K562 (cell line): ENCODE measurements at regions of chr16 and their contacts with region 1.

Region 1: GRCh38 chr16:30602616-30603277 is 7.4 kb downstream of the ZNF689 start:
- DNase-seq: no peak
- ATAC-seq: no peak
- H3K4me3 ChIP-seq: no peak overlapping the region
- H3K27ac ChIP-seq: no peak overlapping the region
- H3K4me1 ChIP-seq: peaks cover 0 to 12% of the 10 kb centered on the region in 2 experiments; a peak in 2 of 5 replicates
- H3K27me3 ChIP-seq: no peaks in the 10 kb centered on the region
- CTCF ChIP-seq: no peak
- EP300 ChIP-seq: no peak
- POLR2A ChIP-seq: 0 out of 2 replicates have a peak, but pooled peaks have one; percentile 35
- RAD21 ChIP-seq: no peak

Region 2: DNA sequence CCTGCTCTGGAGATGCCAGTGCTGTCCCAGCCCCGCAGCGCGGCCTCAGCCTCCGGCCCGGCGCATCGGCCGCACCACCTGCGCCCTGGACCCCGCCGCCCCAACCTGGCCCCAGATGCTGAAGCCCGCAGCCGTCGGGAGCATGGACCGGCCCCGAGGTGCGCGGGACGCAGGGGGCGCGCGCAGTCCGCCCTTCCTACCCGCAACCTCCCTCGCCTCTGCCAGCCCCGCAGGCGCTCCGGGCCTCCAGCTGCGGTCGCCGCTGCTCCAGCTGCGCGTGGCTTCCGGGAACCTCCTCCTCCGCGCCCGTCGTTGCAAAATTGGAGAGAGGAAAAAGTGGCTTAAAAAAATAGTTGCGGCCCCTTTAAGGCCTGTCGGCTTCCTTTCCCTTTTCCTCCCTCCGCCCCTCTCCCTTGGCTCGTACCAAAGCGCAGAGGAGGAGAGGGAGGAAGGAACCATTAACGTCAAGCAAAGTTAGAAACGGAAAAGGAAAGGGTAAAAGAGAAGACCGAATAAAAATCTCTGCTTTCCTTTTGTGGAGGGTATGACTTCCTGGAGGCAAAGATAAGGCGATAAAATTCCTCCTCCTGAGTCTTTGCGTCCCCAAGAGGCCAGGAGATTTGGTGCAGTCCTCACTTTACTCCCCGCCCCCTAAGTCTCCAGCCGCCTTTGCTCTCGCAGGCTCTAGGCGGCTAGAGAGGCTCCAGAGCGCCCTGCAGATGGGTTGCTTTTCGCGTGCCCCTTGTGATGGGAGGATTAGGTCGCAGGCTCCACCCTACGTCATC is 739.7 kb before region 1 on chr16 and contains the start of gene CDIPT:
- CTCF ChIA-PET with region 1: no interaction called
- POLR2A ChIA-PET with region 1: no interaction called
- in situ Hi-C with region 1: no loop called
- intact Hi-C with region 1: no loop called
- DNase-seq: peak; percentile 90 to 98 (median 92)
- ATAC-seq: peak; percentile 97
- H3K4me3 ChIP-seq: peak within 1 kb of the TSS; percentile 98
- H3K27ac ChIP-seq: peak within 1 kb of the TSS; percentile 99
- H3K4me1 ChIP-seq: peaks cover 0 to 32% of the 10 kb centered on the region in 2 experiments; a peak in 3 of 5 replicates
- H3K27me3 ChIP-seq: no peaks in the 10 kb centered on the region; a peak in 1 of 5 replicates
- CTCF ChIP-seq: peak; percentile 87 to 91 (median 90)
- EP300 ChIP-seq: no peak
- POLR2A ChIP-seq: peak; percentile 60; the same call in 1 of the 2 replicates
- RAD21 ChIP-seq: peak; percentile 40 to 53; a peak in 3 of 4 replicates
- polyA plus RNA-seq, gene CDIPT: 1.3 to 2.1 TPM

Region 3: GRCh38 chr16:30526823-30527635 is 75.7 kb before region 1 on chr16:
- CTCF ChIA-PET with region 1: no interaction called
- POLR2A ChIA-PET with region 1: interaction called, 3 read pairs
- in situ Hi-C with region 1: no loop called
- intact Hi-C with region 1: loop called (anchors 5 kb)
- DNase-seq: peak; percentile 95 to 99 (median 96)
- ATAC-seq: peak; percentile 95
- H3K4me3 ChIP-seq: peak overlapping the region; percentile 78
- H3K27ac ChIP-seq: peak overlapping the region; percentile 97
- H3K4me1 ChIP-seq: peaks cover 36 to 67% of the 10 kb centered on the region in 2 experiments; a peak in 4 of 5 replicates
- H3K27me3 ChIP-seq: no peaks in the 10 kb centered on the region
- CTCF ChIP-seq: peak; percentile 20 to 37 (median 31); a peak in 4 of 6 replicates
- EP300 ChIP-seq: no peak
- POLR2A ChIP-seq: peak; percentile 91
- RAD21 ChIP-seq: peak in 1 of 2 experiments; percentile 32; a peak in 1 of 4 replicates

Region 4: GRCh38 chr16:30844671-30845449 is 242.1 kb after region 1 on chr16:
- CTCF ChIA-PET with region 1: no interaction called
- POLR2A ChIA-PET with region 1: no interaction called
- in situ Hi-C with region 1: no loop called
- intact Hi-C with region 1: no loop called
- DNase-seq: peak; percentile 86 to 96 (median 87)
- ATAC-seq: peak; percentile 96
- H3K4me3 ChIP-seq: no peak overlapping the region
- H3K27ac ChIP-seq: peak overlapping the region; percentile 46; the same call in 2 of the 3 replicates
- H3K4me1 ChIP-seq: peaks cover 4 to 8% of the 10 kb centered on the region in 2 experiments; a peak in 2 of 5 replicates
- H3K27me3 ChIP-seq: no peaks in the 10 kb centered on the region
- CTCF ChIP-seq: peak; percentile 89 to 98 (median 94)
- EP300 ChIP-seq: peak; percentile 13; the same call in 1 of the 2 replicates
- POLR2A ChIP-seq: no peak
- RAD21 ChIP-seq: peak; percentile 94 to 96